Activated CD8-positive, alpha-beta memory T cell treated with anti-CD3 and anti-CD28 coated beads, Interleukin-2, amount 10 ng/mL, durations not matched to agents 7 days and 5 days (primary cell): ENCODE measurements at regions of chr1 and their contacts with region 1.

Region 1: GRCh38 chr1:207885129-207886032 is 25.5 kb downstream of the CD34 start:
- DNase-seq: peak; percentile 81
- ATAC-seq: peak; percentile 77
- H3K4me3 Mint-ChIP-seq: no peak overlapping the region
- H3K27ac Mint-ChIP-seq: peak overlapping the region; percentile 97
- H3K4me1 Mint-ChIP-seq: peaks cover 35% of the 10 kb centered on the region
- H3K27me3 Mint-ChIP-seq: peaks cover 3% of the 10 kb centered on the region

Region 2: GRCh38 chr1:207748737-207749528 is 136.4 kb before region 1 on chr1:
- CTCF ChIA-PET with region 1: no interaction called
- DNase-seq: no peak
- ATAC-seq: no peak
- H3K4me3 Mint-ChIP-seq: no peak overlapping the region
- H3K27ac Mint-ChIP-seq: no peak overlapping the region
- H3K4me1 Mint-ChIP-seq: peaks cover 36% of the 10 kb centered on the region
- H3K27me3 Mint-ChIP-seq: no peaks in the 10 kb centered on the region

Region 3: DNA sequence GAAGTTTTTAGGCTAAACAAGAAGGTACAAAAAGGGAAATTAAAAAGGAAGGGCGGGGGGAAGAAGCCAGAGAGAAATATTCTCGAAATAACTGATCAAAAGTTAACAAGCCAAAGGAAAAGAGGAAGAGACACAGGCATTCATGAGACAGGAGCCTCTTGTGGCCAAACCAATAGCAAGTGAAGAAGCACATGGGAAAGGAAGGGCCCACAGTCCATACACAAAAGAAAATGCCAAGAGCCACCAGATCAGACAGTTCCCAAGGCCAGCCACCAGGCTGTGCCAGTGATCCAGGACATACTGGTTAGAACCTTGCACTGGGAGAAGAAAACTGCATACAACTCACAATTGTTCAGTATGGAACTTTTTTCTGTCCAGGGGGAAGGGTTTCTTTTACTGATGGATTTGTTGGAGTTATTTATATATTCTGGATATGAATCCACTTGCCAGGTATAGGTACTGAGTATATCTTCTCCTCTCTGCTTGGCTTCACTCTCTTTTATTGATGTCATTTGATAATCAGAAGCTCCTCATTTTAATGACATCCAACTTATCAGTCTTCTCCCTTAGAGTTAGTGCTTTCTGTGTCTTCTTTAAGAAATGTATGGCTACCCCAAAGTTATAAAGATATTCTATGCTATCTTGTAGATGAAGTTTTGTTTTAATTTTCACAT is 56.8 kb before region 1 on chr1:
- CTCF ChIA-PET with region 1: interaction called, 37 read pairs
- DNase-seq: peak; percentile 74
- ATAC-seq: peak; percentile 20
- H3K4me3 Mint-ChIP-seq: no peak overlapping the region
- H3K27ac Mint-ChIP-seq: peak overlapping the region; percentile 65
- H3K4me1 Mint-ChIP-seq: peaks cover 95% of the 10 kb centered on the region
- H3K27me3 Mint-ChIP-seq: no peaks in the 10 kb centered on the region

Region 4: DNA sequence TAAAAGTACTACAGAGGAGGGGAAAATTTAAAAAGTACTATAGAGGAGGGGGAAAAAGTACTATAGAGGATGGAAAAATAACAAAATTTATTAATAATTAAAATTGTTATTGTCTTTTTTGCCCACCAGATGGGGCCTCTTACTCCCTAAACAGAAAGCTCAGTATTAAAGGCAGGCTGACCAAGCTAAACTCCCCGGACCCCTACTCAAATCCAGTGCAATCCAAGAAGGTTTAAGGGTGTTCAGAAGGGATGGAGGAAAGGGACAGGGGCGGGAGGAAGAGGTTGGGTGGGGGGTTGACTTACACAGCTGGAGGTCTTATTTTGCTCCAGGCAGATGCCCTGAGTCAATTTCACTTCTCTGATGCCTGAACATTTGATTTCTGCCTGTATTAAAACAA is 11.8 kb after region 1 on chr1:
- CTCF ChIA-PET with region 1: interaction called, 78 read pairs
- DNase-seq: no peak
- ATAC-seq: no peak
- H3K4me3 Mint-ChIP-seq: no peak overlapping the region
- H3K27ac Mint-ChIP-seq: no peak overlapping the region
- H3K4me1 Mint-ChIP-seq: peaks cover 15% of the 10 kb centered on the region
- H3K27me3 Mint-ChIP-seq: peaks cover 5% of the 10 kb centered on the region

Region 5: GRCh38 chr1:207946756-207947155 is 61.4 kb after region 1 on chr1:
- CTCF ChIA-PET with region 1: interaction called, 11 read pairs
- DNase-seq: no peak
- ATAC-seq: no peak
- H3K4me3 Mint-ChIP-seq: no peak overlapping the region
- H3K27ac Mint-ChIP-seq: no peak overlapping the region
- H3K4me1 Mint-ChIP-seq: no peaks in the 10 kb centered on the region
- H3K27me3 Mint-ChIP-seq: peaks cover 26% of the 10 kb centered on the region

Region 6: GRCh38 chr1:207997486-207998268 is 112.3 kb after region 1 on chr1:
- CTCF ChIA-PET with region 1: interaction called, 31 read pairs
- DNase-seq: peak; percentile 63
- ATAC-seq: peak; percentile 85
- H3K4me3 Mint-ChIP-seq: no peak overlapping the region
- H3K27ac Mint-ChIP-seq: no peak overlapping the region
- H3K4me1 Mint-ChIP-seq: no peaks in the 10 kb centered on the region
- H3K27me3 Mint-ChIP-seq: peaks cover 16% of the 10 kb centered on the region